ENCODE measurements at regions of chr7 and their contacts with region 1.

Region 1: DNA sequence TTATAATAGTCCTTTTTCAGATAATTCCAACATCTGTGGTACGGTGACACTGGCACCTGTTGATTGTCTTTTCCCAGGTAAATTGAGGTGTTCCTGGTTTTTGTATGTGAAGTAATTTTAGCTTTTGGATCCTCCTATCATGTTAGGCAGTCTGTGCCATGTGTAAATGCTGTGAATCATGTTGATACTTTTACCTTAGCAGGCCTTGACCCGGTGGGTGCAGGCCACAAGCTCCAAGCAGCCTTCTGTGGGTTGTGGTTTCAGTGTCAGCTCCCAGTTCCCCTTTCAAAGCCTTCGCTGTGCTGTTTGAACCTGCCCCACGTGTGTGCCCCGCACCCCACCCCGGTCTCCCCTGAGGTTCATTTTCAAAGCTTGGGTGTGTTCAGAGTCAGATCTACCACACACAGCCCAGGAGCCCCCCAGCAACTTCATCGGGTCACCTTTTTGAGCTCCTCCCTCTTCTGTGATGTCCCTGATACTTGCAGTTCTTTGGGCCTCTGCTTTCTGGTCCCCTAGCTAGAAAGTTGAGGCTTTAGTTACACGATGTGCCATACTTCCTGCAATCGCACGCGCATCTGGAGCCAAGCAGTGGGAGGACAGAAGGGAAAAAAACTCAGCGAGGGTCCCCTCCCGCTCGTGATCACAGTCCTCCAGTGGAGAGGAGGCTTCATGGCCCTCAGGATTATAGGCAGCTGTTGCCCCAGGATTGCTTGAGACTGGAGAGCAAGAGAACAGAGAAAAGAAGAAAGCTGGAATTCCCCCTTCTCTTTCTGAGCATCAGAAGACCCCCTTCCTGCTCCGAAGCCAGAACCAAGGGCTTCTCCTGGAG is 8.7 kb upstream of the BHLHA15 start:
- DNase-seq: peak; percentile 88
- ATAC-seq: peak; percentile 89
- H3K4me3 Mint-ChIP-seq: peak overlapping the region; percentile 57
- H3K27ac Mint-ChIP-seq: peak overlapping the region; percentile 88
- H3K4me1 Mint-ChIP-seq: peaks cover 47% of the 10 kb centered on the region
- H3K27me3 Mint-ChIP-seq: no peaks in the 10 kb centered on the region

Region 2: GRCh38 chr7:98021588-98022351 is 180.8 kb before region 1 on chr7:
- CTCF ChIA-PET with region 1: interaction called, 15 read pairs
- POLR2A ChIA-PET with region 1: no interaction called
- DNase-seq: peak; percentile 83
- ATAC-seq: peak; percentile 94
- H3K4me3 Mint-ChIP-seq: no peak overlapping the region
- H3K27ac Mint-ChIP-seq: no peak overlapping the region
- H3K4me1 Mint-ChIP-seq: no peaks in the 10 kb centered on the region
- H3K27me3 Mint-ChIP-seq: peaks cover 4% of the 10 kb centered on the region

Region 3: DNA sequence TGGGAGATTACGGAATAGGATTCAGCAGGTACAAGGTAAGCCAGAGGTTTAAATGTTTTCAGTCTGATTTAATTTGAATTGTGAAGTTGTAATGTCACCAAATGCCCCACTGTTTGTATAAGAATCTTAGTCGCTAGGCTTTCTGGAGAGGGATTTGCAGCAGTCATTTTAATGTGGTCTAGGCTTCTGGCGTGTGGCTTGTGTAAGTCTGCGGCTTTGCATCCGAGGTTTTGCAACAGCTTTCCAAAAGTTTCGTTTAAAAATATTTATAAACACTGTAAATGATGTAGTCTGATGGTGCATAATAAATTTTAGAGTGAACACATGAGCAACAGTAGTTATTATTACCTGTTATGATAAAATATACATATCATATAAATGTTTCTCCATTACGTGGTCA is 17.5 kb before region 1 on chr7:
- CTCF ChIA-PET with region 1: no interaction called
- POLR2A ChIA-PET with region 1: no interaction called
- DNase-seq: no peak
- ATAC-seq: no peak
- H3K4me3 Mint-ChIP-seq: no peak overlapping the region
- H3K27ac Mint-ChIP-seq: no peak overlapping the region
- H3K4me1 Mint-ChIP-seq: peaks cover 9% of the 10 kb centered on the region
- H3K27me3 Mint-ChIP-seq: no peaks in the 10 kb centered on the region

Region 4: GRCh38 chr7:98251841-98252639 is 49.5 kb after region 1 on chr7 and contains the start of gene TECPR1:
- CTCF ChIA-PET with region 1: interaction called, 9 read pairs
- POLR2A ChIA-PET with region 1: interaction called, 10 read pairs
- DNase-seq: peak; percentile 92
- ATAC-seq: peak; percentile 92
- H3K4me3 Mint-ChIP-seq: peak within 1 kb of the TSS; percentile 95
- H3K27ac Mint-ChIP-seq: peak within 1 kb of the TSS; percentile 98
- H3K4me1 Mint-ChIP-seq: peaks cover 68% of the 10 kb centered on the region
- H3K27me3 Mint-ChIP-seq: no peaks in the 10 kb centered on the region
- total RNA-seq, gene TECPR1: 49.3 to 55.9 TPM

Region 5: GRCh38 chr7:98323597-98324322 is 121.2 kb after region 1 on chr7:
- CTCF ChIA-PET with region 1: no interaction called
- POLR2A ChIA-PET with region 1: no interaction called
- DNase-seq: no peak
- ATAC-seq: no peak
- H3K4me3 Mint-ChIP-seq: no peak overlapping the region
- H3K27ac Mint-ChIP-seq: no peak overlapping the region
- H3K4me1 Mint-ChIP-seq: no peaks in the 10 kb centered on the region
- H3K27me3 Mint-ChIP-seq: peaks cover 2% of the 10 kb centered on the region

Measured in activated CD8-positive, alpha-beta T cell treated with anti-CD3 and anti-CD28 coated beads, Interleukin-2, amount 10 ng/mL, durations not matched to agents 7 days and 5 days (primary cell).